ENCODE measurements at regions of chr11 and their contacts with region 1.

Region 1: DNA sequence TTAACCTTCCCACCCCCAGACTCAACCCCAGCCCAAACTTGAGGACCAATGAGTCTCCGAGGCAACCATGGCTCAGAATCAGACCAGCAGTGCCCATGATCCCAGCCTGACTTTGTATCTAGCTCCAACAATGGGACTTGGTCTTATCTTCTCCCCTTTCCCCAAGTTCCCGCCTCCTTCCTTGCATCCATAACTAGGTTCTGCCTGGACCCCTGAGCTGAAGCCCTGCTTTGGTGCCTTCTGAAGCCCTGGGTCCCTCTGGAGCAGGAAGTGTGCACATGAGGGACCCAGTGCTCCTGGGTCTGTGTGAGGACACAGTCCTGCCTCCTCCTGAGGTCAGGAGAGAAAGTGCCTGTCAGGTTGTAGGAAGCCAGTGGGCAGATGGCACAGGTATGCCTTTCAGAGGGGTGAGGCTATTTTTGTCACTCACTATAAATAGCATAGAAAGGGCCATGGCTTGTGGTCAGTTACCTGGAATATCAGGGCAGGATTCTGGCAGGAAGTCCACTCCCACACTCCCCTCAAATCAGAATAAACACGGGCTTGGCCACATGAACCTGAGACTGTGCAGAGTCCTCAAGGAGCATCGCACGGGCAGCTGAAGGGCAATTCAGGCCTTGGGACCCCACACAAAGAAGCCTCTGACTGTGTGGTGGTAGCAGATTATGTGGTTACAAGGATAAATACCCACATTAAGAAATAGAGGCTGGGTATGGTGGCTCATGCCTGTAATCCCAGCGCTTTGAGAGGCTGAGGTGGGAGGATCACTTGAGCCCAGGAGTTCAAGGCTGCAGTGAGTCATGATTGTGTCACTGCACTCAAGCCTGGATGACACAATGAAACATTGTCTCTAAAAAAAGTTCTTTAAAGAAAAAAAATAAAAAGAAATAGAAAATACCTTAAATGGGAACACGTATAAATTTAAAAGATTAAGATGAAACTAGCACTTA is 27.4 kb downstream of the RCN1 start:
- DNase-seq: no peak
- ATAC-seq: no peak
- H3K4me3 ChIP-seq: no peak overlapping the region
- H3K27ac ChIP-seq: no peak overlapping the region
- H3K4me1 ChIP-seq: peaks cover 4% of the 10 kb centered on the region
- H3K27me3 ChIP-seq: no peaks in the 10 kb centered on the region
- CTCF ChIP-seq: no peak
- POLR2A ChIP-seq: no peak

Region 2: GRCh38 chr11:32168924-32169323 is 50.6 kb after region 1 on chr11:
- intact Hi-C with region 1: loop called (anchors 10 kb)
- DNase-seq: no peak
- ATAC-seq: no peak
- H3K4me3 ChIP-seq: no peak overlapping the region
- H3K27ac ChIP-seq: no peak overlapping the region
- H3K4me1 ChIP-seq: no peaks in the 10 kb centered on the region
- H3K27me3 ChIP-seq: peaks cover 0 to 4% of the 10 kb centered on the region in 2 donors
- CTCF ChIP-seq: no peak
- POLR2A ChIP-seq: no peak